ENCODE measurements at regions of chr10 and their contacts with region 1.

Region 1: DNA sequence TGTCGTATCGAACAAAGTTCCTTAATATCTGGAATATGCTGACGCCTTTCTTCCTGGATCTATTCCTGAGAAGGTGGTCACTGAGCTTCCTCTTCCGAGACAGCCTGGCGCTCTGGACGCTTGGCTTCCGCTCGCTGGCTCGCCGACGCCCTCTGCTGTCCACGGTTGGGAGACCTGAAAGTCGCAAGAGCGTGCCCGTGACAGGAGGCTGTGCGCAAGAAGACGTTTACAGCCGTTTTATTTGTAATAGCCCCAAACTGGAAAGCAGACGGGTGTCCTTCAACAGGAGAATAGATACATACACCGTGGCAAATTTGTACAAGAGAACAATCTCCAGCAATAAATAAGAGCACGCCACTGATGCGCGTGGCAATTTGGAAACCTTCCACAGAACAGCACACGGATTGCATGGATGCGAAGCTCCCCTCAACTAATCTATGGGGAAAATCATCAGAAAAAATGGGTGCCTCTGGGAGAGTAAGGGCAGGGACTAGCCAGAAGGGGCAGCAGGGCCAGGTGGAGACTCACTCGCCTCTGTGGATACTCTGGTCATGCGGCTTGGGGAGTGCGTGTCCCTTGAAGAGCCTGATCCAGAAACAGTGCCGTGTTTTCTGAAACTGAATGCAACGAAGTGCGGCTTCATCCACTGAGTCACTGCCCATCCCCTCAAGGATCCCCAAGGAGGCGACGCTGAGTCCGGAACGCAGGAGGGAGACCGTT is 41.5 kb upstream of the BNIP3 start:
- DNase-seq: peak; percentile 73
- H3K27ac ChIP-seq: no peak overlapping the region
- CTCF ChIP-seq: peak; percentile 88

Region 2: GRCh38 chr10:131546086-131546810 is 477.0 kb before region 1 on chr10:
- CTCF ChIA-PET with region 1: no interaction called
- POLR2A ChIA-PET with region 1: no interaction called
- DNase-seq: peak; percentile 19
- H3K27ac ChIP-seq: no peak overlapping the region
- CTCF ChIP-seq: no peak

Region 3: GRCh38 chr10:131774681-131775085 is 248.6 kb before region 1 on chr10:
- CTCF ChIA-PET with region 1: no interaction called
- POLR2A ChIA-PET with region 1: no interaction called
- DNase-seq: no peak
- H3K27ac ChIP-seq: no peak overlapping the region
- CTCF ChIP-seq: no peak

Region 4: GRCh38 chr10:131812736-131813604 is 210.3 kb before region 1 on chr10:
- CTCF ChIA-PET with region 1: interaction called, 11 read pairs
- POLR2A ChIA-PET with region 1: no interaction called
- DNase-seq: no peak
- H3K27ac ChIP-seq: no peak overlapping the region
- CTCF ChIP-seq: no peak

Region 5: GRCh38 chr10:131860311-131860710 is 162.9 kb before region 1 on chr10:
- CTCF ChIA-PET with region 1: no interaction called
- POLR2A ChIA-PET with region 1: no interaction called
- DNase-seq: no peak
- H3K27ac ChIP-seq: no peak overlapping the region
- CTCF ChIP-seq: no peak

Region 6: GRCh38 chr10:131885391-131886161 is 137.7 kb before region 1 on chr10:
- CTCF ChIA-PET with region 1: interaction called, 18 read pairs
- POLR2A ChIA-PET with region 1: no interaction called
- DNase-seq: peak; percentile 53
- H3K27ac ChIP-seq: no peak overlapping the region
- CTCF ChIP-seq: peak; percentile 68

Region 7: GRCh38 chr10:131972474-131973071 is 50.7 kb before region 1 on chr10:
- CTCF ChIA-PET with region 1: interaction called, 10 read pairs
- POLR2A ChIA-PET with region 1: no interaction called
- DNase-seq: no peak
- H3K27ac ChIP-seq: peak overlapping the region; percentile 48
- CTCF ChIP-seq: no peak

Region 8: DNA sequence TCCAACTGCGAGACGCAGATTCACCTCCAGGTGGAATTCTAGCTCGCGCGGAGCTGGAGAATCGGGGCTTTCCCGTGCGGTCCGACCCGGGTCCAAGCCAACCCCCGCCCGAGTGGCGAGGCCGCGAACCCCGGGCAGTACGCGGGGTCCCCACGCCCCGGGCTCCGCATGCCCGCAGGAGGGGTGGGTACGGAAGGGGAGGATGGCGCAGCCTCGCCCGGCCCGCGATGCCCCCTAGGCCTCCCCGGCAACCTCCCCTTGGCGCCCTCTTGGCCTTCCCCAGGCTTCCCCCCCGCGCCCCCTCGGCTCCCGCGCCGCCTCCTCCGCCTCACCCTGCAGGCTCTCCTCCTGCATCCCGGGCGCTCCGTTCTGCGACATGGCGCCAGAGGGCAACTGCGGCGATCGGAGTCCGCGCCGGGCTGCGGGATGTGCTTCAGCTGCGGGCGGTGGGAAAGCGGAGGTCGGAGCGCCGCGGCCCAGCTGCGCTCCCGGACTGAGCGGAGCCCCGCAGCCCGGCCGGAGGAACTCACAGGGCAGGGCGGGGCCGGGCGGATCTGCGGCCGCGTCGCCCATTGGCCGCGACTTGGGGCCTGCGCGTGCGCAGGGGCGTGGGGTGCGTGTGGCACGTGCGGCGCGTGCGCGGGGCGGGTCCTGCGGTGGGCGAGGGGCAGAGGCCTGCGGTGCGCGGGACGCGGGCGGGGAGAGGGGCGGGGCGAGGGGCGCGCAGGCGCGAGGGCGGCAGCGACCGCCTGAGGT is 41.6 kb before region 1 on chr10 and contains the start of gene BNIP3:
- CTCF ChIA-PET with region 1: interaction called, 19 read pairs
- POLR2A ChIA-PET with region 1: interaction called, 4 read pairs
- DNase-seq: peak; percentile 96
- H3K27ac ChIP-seq: peak within 1 kb of the TSS; percentile 59
- CTCF ChIP-seq: no peak

Region 9: GRCh38 chr10:131997366-131998049 is 25.7 kb before region 1 on chr10:
- CTCF ChIA-PET with region 1: interaction called, 22 read pairs
- POLR2A ChIA-PET with region 1: no interaction called
- DNase-seq: peak; percentile 57
- H3K27ac ChIP-seq: peak overlapping the region; percentile 56
- CTCF ChIP-seq: no peak

Region 10: GRCh38 chr10:132010483-132010882 is 12.8 kb before region 1 on chr10:
- CTCF ChIA-PET with region 1: interaction called, 10 read pairs
- POLR2A ChIA-PET with region 1: no interaction called
- DNase-seq: no peak
- H3K27ac ChIP-seq: no peak overlapping the region
- CTCF ChIP-seq: no peak

Region 11: DNA sequence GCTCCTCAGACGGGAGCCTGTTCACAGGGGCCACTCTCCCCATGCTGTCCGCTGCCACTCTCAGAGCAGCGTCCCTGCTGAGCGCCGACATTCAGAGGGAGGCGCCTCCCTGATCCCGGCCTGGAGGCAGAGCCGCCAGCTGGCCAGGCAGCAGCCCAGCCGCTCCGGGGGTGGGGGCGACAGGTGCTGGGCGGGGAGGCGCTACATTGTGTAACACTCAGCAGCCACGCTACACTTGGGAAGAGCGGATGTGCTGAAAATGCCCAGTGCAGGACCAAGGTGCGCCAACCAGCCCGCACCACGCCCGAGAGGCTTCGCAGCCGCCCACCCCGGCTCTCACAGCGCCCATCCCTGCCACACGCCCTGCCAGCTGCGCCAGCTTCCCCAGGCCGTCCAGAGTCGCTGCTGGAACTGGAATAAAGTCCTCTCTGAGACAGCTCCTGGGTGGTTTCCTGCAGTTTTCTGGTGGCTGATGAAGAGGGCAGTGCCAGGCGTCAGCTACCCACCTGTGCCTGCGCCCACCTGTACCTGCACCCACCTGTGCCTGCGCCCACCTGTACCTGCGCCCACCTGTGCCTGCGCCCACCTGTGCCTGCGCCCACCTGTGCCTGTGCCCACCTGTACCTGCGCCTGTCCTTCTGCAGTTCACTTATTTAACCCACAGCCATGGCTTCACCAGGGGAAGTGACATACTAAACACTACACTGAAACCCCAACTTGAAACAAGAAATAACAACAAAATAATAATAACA is 258.8 kb after region 1 on chr10:
- CTCF ChIA-PET with region 1: no interaction called
- POLR2A ChIA-PET with region 1: no interaction called
- DNase-seq: no peak
- H3K27ac ChIP-seq: no peak overlapping the region
- CTCF ChIP-seq: no peak